ENCODE measurements at regions of chr15 and their contacts with region 1.

Region 1: GRCh38 chr15:48507416-48508065 is 138.0 kb downstream of the FBN1 start:
- DNase-seq: peak; percentile 63
- H3K4me3 Mint-ChIP-seq: no peak overlapping the region
- H3K27ac Mint-ChIP-seq: peak overlapping the region; percentile 66
- H3K4me1 Mint-ChIP-seq: no peaks in the 10 kb centered on the region
- H3K27me3 Mint-ChIP-seq: no peaks in the 10 kb centered on the region
- CTCF ChIP-seq: peak; percentile 33

Region 2: DNA sequence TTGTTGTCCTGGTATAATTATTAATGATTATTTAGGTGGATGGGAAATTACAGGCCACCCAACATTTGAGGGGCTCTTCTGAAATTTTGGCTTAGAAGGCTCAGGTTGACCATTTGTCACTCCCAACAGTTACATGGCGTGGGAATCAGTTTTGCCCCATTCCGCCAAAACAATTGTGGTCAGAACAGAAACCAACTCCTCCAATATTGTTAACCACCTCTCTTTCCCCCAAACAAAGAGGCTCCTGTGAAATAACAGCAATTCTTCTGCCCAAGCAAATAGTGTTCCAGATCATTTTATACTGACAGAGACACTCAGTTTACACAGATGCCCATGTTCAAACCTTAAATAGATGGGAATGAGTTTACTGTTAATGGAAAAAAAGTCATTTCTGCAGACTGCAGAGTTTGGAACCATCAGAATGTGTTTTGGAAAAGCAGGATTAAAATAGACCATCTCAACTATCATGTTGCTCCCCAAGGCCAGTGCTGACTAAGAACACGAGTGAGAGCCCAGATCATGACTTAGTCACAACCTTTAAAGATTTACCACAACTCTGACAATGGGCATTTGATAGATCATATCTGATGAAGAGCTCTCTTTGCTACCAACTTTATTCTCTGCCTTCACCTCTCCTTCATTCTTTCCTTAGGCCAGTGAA is 74.2 kb before region 1 on chr15:
- CTCF ChIA-PET with region 1: no interaction called
- POLR2A ChIA-PET with region 1: no interaction called
- intact Hi-C with region 1: no loop called
- DNase-seq: no peak
- H3K4me3 Mint-ChIP-seq: no peak overlapping the region
- H3K27ac Mint-ChIP-seq: no peak overlapping the region
- H3K4me1 Mint-ChIP-seq: no peaks in the 10 kb centered on the region
- H3K27me3 Mint-ChIP-seq: no peaks in the 10 kb centered on the region
- CTCF ChIP-seq: no peak

Region 3: GRCh38 chr15:48493084-48493762 is 14.3 kb before region 1 on chr15:
- CTCF ChIA-PET with region 1: interaction called, 10 read pairs
- POLR2A ChIA-PET with region 1: no interaction called
- intact Hi-C with region 1: no loop called
- DNase-seq: peak; percentile 6
- H3K4me3 Mint-ChIP-seq: no peak overlapping the region
- H3K27ac Mint-ChIP-seq: peak overlapping the region; percentile 70
- H3K4me1 Mint-ChIP-seq: peaks cover 8% of the 10 kb centered on the region
- H3K27me3 Mint-ChIP-seq: no peaks in the 10 kb centered on the region
- CTCF ChIP-seq: no peak

Region 4: DNA sequence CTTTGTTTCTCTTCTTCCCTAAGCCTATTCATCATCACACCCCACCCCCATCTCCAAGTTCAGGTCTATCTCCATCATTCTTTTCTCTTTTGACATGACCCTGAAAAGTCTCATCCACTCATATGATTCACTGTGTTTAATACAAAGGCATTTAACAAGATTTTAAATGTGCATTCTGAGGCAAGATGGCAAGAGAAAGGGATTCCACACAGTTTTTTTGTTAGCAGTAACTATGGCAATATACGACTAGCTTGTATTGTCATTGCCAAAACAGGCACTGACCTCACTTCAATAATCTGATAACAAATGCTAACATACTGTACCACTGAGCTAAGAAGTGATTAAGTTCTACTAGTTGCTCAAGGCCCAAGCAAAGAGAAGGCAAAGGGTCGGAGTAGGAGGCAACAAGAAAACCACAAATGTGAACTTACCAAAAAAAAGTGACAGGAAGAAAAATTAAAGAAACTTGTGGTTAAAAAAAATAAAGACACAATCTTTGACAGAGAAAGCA is 84.7 kb after region 1 on chr15:
- CTCF ChIA-PET with region 1: no interaction called
- POLR2A ChIA-PET with region 1: no interaction called
- intact Hi-C with region 1: no loop called
- DNase-seq: no peak
- H3K4me3 Mint-ChIP-seq: no peak overlapping the region
- H3K27ac Mint-ChIP-seq: no peak overlapping the region
- H3K4me1 Mint-ChIP-seq: peaks cover 12% of the 10 kb centered on the region
- H3K27me3 Mint-ChIP-seq: no peaks in the 10 kb centered on the region
- CTCF ChIP-seq: no peak

Measured in MCF 10A (cell line).